Activated T-helper 2 cell treated with anti-CD3 and anti-CD28 coated beads, Interferon-gamma antibody, Interleukin-2, Interleukin-4, amounts not matched to agents 10 μg/mL and 5 μg/mL and 100 μg/mL, durations not matched to agents 14 hours and 24 hours and 36 hours (primary cell): ENCODE measurements at regions of chr4 and their contacts with region 1.

Region 1: GRCh38 chr4:4488405-4489404 is 53.1 kb downstream of the STX18 start:
- DNase-seq: peak; percentile 49
- H3K4me3 Mint-ChIP-seq: no peak overlapping the region
- H3K27ac Mint-ChIP-seq: no peak overlapping the region
- H3K4me1 Mint-ChIP-seq: peaks cover 5% of the 10 kb centered on the region
- H3K27me3 Mint-ChIP-seq: no peaks in the 10 kb centered on the region

Region 2: GRCh38 chr4:4455210-4455865 is 33.4 kb before region 1 on chr4:
- intact Hi-C with region 1: no loop called
- DNase-seq: no peak
- H3K4me3 Mint-ChIP-seq: no peak overlapping the region
- H3K27ac Mint-ChIP-seq: no peak overlapping the region
- H3K4me1 Mint-ChIP-seq: no peaks in the 10 kb centered on the region
- H3K27me3 Mint-ChIP-seq: no peaks in the 10 kb centered on the region

Region 3: GRCh38 chr4:4502694-4503311 is 14.1 kb after region 1 on chr4:
- intact Hi-C with region 1: loop called (anchors 1 kb)
- DNase-seq: peak; percentile 23
- H3K4me3 Mint-ChIP-seq: peak overlapping the region; percentile 68
- H3K27ac Mint-ChIP-seq: peak overlapping the region; percentile 73
- H3K4me1 Mint-ChIP-seq: peaks cover 17% of the 10 kb centered on the region
- H3K27me3 Mint-ChIP-seq: no peaks in the 10 kb centered on the region

Region 4: GRCh38 chr4:4524364-4524763 is 35.7 kb after region 1 on chr4:
- intact Hi-C with region 1: no loop called
- DNase-seq: peak; percentile 25
- H3K4me3 Mint-ChIP-seq: no peak overlapping the region
- H3K27ac Mint-ChIP-seq: no peak overlapping the region
- H3K4me1 Mint-ChIP-seq: peaks cover 8% of the 10 kb centered on the region
- H3K27me3 Mint-ChIP-seq: no peaks in the 10 kb centered on the region

Region 5: DNA sequence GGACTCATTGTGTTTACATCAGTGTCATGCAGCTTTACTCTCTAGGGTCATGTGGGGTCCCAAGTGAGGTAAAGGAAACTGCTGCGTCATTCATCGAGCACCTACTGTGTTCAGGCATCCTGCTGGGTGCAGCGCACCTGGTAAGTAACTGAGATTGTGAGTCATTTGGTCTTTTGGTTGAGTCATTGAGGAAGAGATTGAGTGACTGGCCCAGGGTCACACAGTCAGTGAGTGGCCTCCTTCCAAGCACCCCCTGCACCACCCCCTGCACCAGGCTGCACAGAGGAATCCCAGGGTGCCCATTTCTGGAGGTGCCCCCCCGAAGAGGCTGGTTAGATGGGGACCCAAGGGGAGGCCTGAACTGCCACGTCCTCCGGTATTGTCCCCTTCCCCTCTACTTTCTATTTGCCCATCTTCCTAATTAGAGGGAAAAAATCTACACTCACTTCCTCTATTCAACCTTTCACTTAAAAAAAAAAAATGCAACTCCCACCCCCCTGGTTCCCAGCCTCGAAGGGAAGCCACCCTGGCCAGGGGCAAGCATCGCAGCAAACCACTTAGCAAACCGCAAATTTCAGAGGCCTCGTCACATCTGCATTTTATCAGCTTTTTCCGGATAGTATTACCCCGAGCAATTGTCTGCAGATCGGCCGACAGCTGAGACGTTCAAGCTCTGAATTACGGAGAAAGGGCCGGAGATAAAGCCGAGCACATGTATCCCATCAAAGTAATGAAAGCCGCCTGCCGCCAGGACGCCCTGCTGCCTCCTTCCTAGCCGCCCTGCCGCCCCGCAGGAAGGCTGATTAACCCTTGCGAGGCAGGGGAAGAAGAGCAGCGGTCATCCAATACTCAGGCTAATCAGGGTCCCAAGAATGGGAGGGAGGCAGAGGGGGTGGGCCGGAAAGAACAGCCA is 274.5 kb after region 1 on chr4:
- intact Hi-C with region 1: loop called (anchors 5 kb)
- DNase-seq: no peak
- H3K4me3 Mint-ChIP-seq: no peak overlapping the region
- H3K27ac Mint-ChIP-seq: no peak overlapping the region
- H3K4me1 Mint-ChIP-seq: peaks cover 5% of the 10 kb centered on the region
- H3K27me3 Mint-ChIP-seq: no peaks in the 10 kb centered on the region

Region 6: GRCh38 chr4:4859843-4860802 is 371.4 kb after region 1 on chr4:
- intact Hi-C with region 1: loop called (anchors 2 kb)
- DNase-seq: no peak
- H3K4me3 Mint-ChIP-seq: peak overlapping the region; percentile 60
- H3K27ac Mint-ChIP-seq: peak overlapping the region; percentile 22
- H3K4me1 Mint-ChIP-seq: peaks cover 9% of the 10 kb centered on the region
- H3K27me3 Mint-ChIP-seq: peaks cover 77% of the 10 kb centered on the region

Region 7: GRCh38 chr4:4880492-4880891 is 391.8 kb after region 1 on chr4:
- intact Hi-C with region 1: loop called (anchors 5 kb)
- DNase-seq: no peak
- H3K4me3 Mint-ChIP-seq: no peak overlapping the region
- H3K27ac Mint-ChIP-seq: no peak overlapping the region
- H3K4me1 Mint-ChIP-seq: no peaks in the 10 kb centered on the region
- H3K27me3 Mint-ChIP-seq: peaks cover 6% of the 10 kb centered on the region